ENCODE measurements at regions of chr13 and their contacts with region 1.

Region 1: GRCh38 chr13:39616087-39616694 is 13.2 kb upstream of the LHFPL6 start:
- DNase-seq: peak; percentile 64
- H3K4me3 ChIP-seq: no peak overlapping the region; a peak in 1 of 4 replicates
- H3K27ac ChIP-seq: no peak overlapping the region
- H3K4me1 ChIP-seq: peaks cover 0 to 6% of the 10 kb centered on the region in 2 experiments; a peak in 1 of 4 replicates
- H3K27me3 ChIP-seq: no peaks in the 10 kb centered on the region
- CTCF ChIP-seq: peak; percentile 90
- EP300 ChIP-seq: no peak
- RAD21 ChIP-seq: peak; percentile 87

Region 2: GRCh38 chr13:39051157-39051556 is 565.0 kb before region 1 on chr13:
- CTCF ChIA-PET with region 1: interaction called, 16 read pairs
- POLR2A ChIA-PET with region 1: no interaction called
- DNase-seq: peak; percentile 21
- H3K4me3 ChIP-seq: no peak overlapping the region; a peak in 1 of 4 replicates
- H3K27ac ChIP-seq: no peak overlapping the region
- H3K4me1 ChIP-seq: no peaks in the 10 kb centered on the region; a peak in 1 of 4 replicates
- H3K27me3 ChIP-seq: no peaks in the 10 kb centered on the region
- CTCF ChIP-seq: peak; percentile 66
- EP300 ChIP-seq: no peak
- RAD21 ChIP-seq: peak; percentile 76

Region 3: GRCh38 chr13:39273953-39274738 is 342.0 kb before region 1 on chr13:
- CTCF ChIA-PET with region 1: interaction called, 20 read pairs
- POLR2A ChIA-PET with region 1: no interaction called
- DNase-seq: no peak
- H3K4me3 ChIP-seq: no peak overlapping the region
- H3K27ac ChIP-seq: no peak overlapping the region
- H3K4me1 ChIP-seq: no peaks in the 10 kb centered on the region
- H3K27me3 ChIP-seq: no peaks in the 10 kb centered on the region
- CTCF ChIP-seq: 0 out of 2 replicates have a peak, but pooled peaks have one; percentile 16
- EP300 ChIP-seq: no peak
- RAD21 ChIP-seq: peak; percentile 47

Region 4: DNA sequence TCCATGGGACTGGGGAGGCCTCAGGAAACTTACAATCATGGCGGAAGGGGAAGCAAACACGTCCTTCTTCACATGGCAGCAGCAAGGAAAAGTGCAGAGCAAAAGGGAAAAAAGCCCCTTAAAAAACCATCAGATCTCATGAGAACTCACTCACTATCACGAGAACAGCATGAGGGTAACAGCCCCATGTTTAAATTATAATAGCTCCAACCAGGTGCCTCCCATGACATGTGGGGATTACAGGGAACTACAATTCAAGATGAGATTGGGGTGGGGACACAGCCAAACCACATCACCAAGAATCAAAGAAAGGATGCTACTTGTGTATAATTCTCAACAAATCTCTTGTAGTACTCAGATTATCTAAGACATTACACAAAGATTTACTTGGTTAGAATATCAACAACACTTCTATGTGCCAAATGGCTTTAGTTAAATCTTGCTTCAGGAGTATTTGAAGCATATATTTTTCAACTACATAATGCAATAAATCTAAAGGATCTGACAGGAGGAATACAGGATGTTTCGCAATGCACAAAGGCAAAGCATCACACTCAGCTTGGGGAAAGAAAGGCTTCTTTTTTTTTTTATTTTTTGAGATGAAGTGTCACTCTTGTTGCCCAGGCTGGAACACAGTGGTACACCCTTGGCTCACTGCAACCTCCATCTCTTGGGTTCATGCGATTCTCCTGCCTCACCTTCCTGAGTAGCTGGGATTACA is 193.2 kb before region 1 on chr13:
- CTCF ChIA-PET with region 1: interaction called, 18 read pairs
- POLR2A ChIA-PET with region 1: no interaction called
- DNase-seq: no peak
- H3K4me3 ChIP-seq: no peak overlapping the region
- H3K27ac ChIP-seq: no peak overlapping the region
- H3K4me1 ChIP-seq: peaks cover 0 to under 1% of the 10 kb centered on the region in 2 experiments; a peak in 1 of 4 replicates
- H3K27me3 ChIP-seq: no peaks in the 10 kb centered on the region
- CTCF ChIP-seq: no peak
- EP300 ChIP-seq: no peak
- RAD21 ChIP-seq: no peak

Region 5: DNA sequence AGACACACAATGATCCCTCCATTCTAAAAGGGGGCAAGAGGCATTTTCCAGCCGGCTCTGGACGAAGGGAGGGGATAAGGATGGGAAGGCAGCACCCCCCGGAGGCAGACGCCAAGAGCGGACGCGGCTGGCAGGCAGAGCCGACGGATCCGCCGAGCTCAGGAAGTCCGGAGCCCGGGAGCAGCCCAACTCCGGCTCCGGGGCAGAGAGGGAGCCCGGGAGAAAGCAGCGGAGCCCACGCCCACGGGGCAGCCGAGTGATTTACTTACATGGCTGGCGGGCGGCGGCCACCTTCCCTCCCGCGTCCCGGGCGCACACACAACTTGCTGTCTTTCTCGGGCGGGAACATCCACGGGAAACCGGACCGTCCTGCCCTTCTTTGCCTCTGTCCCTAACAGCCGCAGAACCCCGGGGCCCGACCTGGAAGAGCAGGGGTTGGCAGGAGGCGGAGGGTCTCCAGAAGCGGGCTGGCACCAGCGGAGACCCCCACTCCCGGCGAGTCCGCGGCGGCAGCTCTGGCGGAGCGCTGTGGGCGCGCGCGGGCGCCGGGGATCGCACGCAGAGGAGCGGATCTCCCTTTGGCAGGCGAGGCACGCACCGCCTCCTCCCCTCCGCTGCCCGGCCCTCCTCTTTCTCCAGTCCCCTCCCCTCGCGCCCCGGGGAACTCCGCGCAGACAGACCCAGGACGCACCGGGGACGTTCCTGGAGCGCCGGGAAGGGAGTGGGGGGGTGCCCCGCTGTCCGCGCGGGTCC is 13.4 kb before region 1 on chr13 and contains the start of gene LHFPL6:
- CTCF ChIA-PET with region 1: interaction called, 44 read pairs
- POLR2A ChIA-PET with region 1: no interaction called
- DNase-seq: peak; percentile 88
- H3K4me3 ChIP-seq: peak within 1 kb of the TSS; percentile 86 to 96
- H3K27ac ChIP-seq: peak within 1 kb of the TSS; percentile 34 to 62
- H3K4me1 ChIP-seq: peaks cover 5 to 14% of the 10 kb centered on the region in 2 experiments; a peak in 3 of 4 replicates
- H3K27me3 ChIP-seq: no peaks in the 10 kb centered on the region
- CTCF ChIP-seq: peak; percentile 66
- EP300 ChIP-seq: 0 out of 4 replicates have a peak, but pooled peaks of 1 of the 2 experiments have one; percentile 7
- RAD21 ChIP-seq: peak; percentile 58
- polyA plus RNA-seq, gene LHFPL6: 22.2 and 25.7 TPM in 2 replicates